ENCODE measurements at regions of chr19 and their contacts with region 1.

Region 1: DNA sequence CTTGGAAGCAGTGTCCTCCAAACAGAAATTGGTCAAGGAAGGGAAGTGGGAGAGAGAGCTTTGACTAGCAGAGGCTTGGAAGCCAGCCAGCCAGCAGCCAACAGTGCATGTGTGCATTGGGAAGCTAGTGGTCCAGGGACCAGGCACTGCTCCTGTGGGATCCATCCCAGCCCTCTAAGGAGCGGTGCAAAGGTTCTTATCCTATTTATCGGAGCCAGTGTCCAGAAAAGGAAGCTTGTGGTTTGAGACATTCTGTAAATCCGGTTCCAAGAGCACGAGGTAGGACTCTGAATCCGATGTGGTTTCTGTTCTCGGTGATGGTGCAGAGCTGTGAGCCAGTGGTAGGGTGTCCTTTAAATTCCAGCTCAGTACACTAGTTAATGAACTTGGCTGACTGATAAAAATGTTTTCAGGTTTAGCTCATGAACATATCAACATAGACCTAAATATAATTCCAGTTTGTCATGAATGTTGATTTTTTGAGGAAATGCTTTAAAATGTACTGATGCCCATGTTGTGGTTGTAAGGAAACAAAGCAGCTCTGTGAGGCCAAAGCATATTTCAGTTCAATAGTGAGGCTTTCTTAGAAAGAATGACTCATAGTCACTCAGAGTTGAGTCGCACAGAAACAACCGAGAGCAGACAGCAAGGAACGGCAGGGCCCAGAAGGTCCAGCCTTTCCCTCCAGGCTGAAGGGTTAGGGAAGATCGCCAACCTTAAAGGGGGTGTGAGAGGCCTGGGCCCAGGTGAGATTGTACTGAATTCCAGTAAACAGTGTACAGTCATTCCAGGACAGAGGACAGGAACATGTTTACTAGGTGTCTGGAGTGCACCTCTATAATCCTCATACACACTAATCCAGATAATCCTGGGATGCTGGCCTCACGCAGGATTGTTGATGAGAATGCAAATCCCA is 21.5 kb upstream of the GARRE1 start:
- DNase-seq: no peak
- H3K4me3 ChIP-seq: no peak overlapping the region
- H3K27ac ChIP-seq: peak overlapping the region; percentile 16 to 63 (median 33)
- H3K4me1 ChIP-seq: peaks cover 9 to 28% (median 23%) of the 10 kb centered on the region in 4 donors
- H3K27me3 ChIP-seq: no peaks in the 10 kb centered on the region
- CTCF ChIP-seq: no peak
- EP300 ChIP-seq: no peak
- POLR2A ChIP-seq: no peak

Region 2: DNA sequence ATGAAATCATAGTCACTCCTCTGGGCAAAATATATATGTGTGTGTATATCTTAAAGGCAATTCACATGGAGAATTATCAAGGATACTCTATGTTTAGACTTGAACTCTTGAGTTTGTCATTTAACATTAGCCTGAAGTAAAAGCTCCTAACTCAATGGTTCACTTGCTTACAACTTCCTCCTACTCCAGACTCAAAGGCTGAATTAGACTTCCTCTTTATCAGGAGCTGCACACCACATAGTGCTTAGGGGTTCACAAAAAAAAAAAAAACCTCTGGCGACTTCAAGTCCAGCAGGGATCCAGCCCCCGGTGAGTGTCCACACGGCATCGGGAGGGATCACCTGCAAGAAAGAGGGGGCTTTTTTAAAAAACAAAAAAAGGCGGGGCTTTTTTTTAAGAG is 128.7 kb before region 1 on chr19:
- intact Hi-C with region 1: no loop called
- DNase-seq: no peak
- H3K4me3 ChIP-seq: no peak overlapping the region
- H3K27ac ChIP-seq: no peak overlapping the region
- H3K4me1 ChIP-seq: no peaks in the 10 kb centered on the region
- H3K27me3 ChIP-seq: no peaks in the 10 kb centered on the region
- CTCF ChIP-seq: no peak
- EP300 ChIP-seq: no peak
- POLR2A ChIP-seq: no peak

Region 3: GRCh38 chr19:34345947-34346351 is 113.1 kb after region 1 on chr19:
- intact Hi-C with region 1: loop called (anchors 10 kb)
- DNase-seq: no peak
- H3K4me3 ChIP-seq: no peak overlapping the region
- H3K27ac ChIP-seq: no peak overlapping the region
- H3K4me1 ChIP-seq: no peaks in the 10 kb centered on the region
- H3K27me3 ChIP-seq: no peaks in the 10 kb centered on the region
- CTCF ChIP-seq: peak; percentile 55 to 76 (median 61)
- EP300 ChIP-seq: no peak
- POLR2A ChIP-seq: no peak